CD8-positive, alpha-beta T cell (primary cell): ENCODE measurements at regions of chr3 and their contacts with region 1.

Region 1: GRCh38 chr3:4373669-4374068 is 70.5 kb downstream of the SETMAR start:
- DNase-seq: no peak
- ATAC-seq: no peak
- H3K4me3 ChIP-seq: no peak overlapping the region
- H3K4me3 Mint-ChIP-seq: no peak overlapping the region
- H3K27ac ChIP-seq: no peak overlapping the region
- H3K27ac Mint-ChIP-seq: no peak overlapping the region
- H3K4me1 ChIP-seq: no peaks in the 10 kb centered on the region
- H3K4me1 Mint-ChIP-seq: no peaks in the 10 kb centered on the region
- H3K27me3 ChIP-seq: no peaks in the 10 kb centered on the region
- H3K27me3 Mint-ChIP-seq: no peaks in the 10 kb centered on the region
- CTCF ChIP-seq: no peak

Region 2: DNA sequence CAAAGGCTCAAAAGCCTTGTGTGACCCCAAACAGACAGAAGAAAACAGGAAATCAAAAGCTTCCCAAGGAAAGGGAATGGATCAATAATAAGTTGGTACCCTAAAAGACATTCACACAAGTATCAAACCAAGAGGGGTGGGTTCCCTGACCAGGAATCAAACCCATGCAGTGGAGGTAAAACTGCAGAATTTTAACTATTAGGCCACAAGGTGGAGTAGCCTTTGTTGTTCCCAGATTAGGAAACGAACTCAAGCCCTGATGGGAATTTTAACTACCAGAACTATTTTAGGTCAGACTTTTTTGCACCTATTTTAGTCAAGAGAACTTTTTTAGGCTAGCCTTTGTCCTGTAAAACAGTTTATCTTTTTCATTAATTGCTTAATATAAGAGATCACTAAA is 39.1 kb before region 1 on chr3:
- CTCF ChIA-PET with region 1: no interaction called
- POLR2A ChIA-PET with region 1: no interaction called
- intact Hi-C with region 1: no loop called
- DNase-seq: no peak
- ATAC-seq: no peak
- H3K4me3 ChIP-seq: no peak overlapping the region
- H3K4me3 Mint-ChIP-seq: no peak overlapping the region
- H3K27ac ChIP-seq: no peak overlapping the region
- H3K27ac Mint-ChIP-seq: no peak overlapping the region
- H3K4me1 ChIP-seq: no peaks in the 10 kb centered on the region
- H3K4me1 Mint-ChIP-seq: no peaks in the 10 kb centered on the region
- H3K27me3 ChIP-seq: no peaks in the 10 kb centered on the region
- H3K27me3 Mint-ChIP-seq: no peaks in the 10 kb centered on the region
- CTCF ChIP-seq: no peak

Region 3: GRCh38 chr3:4392992-4393391 is 19.3 kb after region 1 on chr3:
- CTCF ChIA-PET with region 1: no interaction called
- POLR2A ChIA-PET with region 1: no interaction called
- intact Hi-C with region 1: loop called in 1 of 2 experiments (anchors 1 kb)
- DNase-seq: no peak
- ATAC-seq: no peak
- H3K4me3 ChIP-seq: no peak overlapping the region
- H3K4me3 Mint-ChIP-seq: no peak overlapping the region
- H3K27ac ChIP-seq: no peak overlapping the region
- H3K27ac Mint-ChIP-seq: no peak overlapping the region
- H3K4me1 ChIP-seq: peaks cover 6% of the 10 kb centered on the region
- H3K4me1 Mint-ChIP-seq: peaks cover 21% of the 10 kb centered on the region
- H3K27me3 ChIP-seq: no peaks in the 10 kb centered on the region
- H3K27me3 Mint-ChIP-seq: no peaks in the 10 kb centered on the region
- CTCF ChIP-seq: no peak